Ovary (tissue), 10 donors: ENCODE measurements at regions of chrX and their contacts with region 1.

Region 1: DNA sequence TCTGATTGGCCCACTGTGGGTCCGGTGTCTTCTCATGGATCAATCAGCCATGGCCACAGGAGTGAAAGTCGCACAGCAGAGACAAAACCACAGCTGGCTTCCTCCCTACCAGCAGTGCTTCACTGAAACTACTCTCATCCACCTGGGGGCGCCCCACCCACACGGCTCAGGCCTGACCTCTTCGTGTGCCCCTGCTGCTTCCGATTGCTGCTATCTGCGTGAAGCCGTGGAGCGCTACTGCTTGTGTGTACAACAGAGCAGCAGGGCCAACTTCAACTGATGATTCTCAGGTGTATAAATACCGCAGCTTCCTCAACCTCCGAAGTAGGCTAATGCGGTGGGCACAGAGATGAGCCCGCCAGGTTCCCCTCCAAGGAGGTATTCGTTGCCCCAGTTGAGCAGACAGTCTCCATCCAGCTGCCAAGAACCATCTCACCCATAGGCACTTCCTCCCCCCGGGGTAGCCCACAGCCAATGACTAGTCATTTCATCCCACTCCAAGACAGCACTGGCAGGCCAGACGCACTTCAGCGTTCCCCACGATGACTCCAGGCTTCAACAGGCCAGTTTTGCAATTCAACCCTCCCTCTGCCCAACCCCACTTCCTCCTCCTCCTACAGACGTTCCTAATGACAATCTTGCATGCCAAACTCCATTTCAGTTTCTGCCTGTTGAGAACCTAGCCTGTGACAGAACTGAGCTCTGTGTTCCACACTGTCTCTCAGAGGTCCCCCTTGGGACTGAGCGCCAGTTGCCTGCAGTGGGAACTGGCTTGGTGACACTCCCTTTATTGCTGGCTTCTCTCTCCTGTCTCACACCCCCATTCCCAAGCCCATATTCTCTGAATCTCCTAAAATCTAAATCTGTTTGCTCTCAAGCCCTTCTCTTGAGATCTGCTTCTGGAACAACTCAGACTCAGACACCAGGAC is 41.3 kb upstream of the ATP6AP2 start:
- DNase-seq: peak in 1 of 5 donors; percentile 33
- H3K4me3 ChIP-seq: no peak overlapping the region
- H3K27ac ChIP-seq: no peak overlapping the region
- H3K4me1 ChIP-seq: no peaks in the 10 kb centered on the region
- H3K27me3 ChIP-seq: no peaks in the 10 kb centered on the region
- CTCF ChIP-seq: no peak
- EP300 ChIP-seq: no peak
- POLR2A ChIP-seq: no peak

Region 2: DNA sequence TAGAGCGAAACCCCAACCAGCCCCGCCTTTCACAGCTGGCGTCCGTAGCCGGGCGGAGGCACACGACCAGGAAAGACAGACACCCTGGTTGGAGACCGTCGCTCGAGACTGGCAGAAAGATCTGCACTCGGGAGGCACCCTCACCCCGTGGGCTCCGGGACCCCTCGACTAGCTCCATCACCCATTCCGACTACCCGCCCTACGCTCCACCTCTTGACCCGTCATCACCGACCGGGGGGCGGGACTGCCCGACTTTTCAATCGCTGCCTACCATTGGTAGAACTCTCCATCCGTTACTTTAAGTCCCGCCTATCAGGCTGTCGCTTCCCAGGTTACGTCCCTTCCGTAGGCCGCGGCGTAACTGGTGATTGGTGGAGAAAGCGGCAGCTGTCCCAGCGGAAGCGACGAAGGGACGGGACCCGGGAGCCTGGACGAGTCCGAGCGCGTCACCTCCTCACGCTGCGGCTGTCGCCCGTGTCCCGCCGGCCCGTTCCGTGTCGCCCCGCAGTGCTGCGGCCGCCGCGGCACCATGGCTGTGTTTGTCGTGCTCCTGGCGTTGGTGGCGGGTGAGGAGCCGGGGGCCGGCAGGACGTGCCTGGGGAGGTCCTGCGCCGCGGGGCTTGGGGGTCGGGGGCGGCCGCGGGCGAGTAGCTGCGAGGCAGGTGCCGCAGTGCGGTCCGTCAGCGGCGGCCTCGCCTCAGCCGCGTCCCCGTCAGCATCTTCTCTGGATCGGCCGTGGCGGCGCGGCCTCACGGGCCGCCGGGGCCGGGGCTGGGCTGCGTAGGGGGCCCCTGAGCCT is 41.3 kb after region 1 on chrX and contains the start of gene ATP6AP2:
- intact Hi-C with region 1: no loop called
- DNase-seq: peak; percentile 84 to 90 (median 88)
- H3K4me3 ChIP-seq: peak within 1 kb of the TSS; percentile 41
- H3K27ac ChIP-seq: peak within 1 kb of the TSS in 1 of 2 donors; percentile 64
- H3K4me1 ChIP-seq: no peaks in the 10 kb centered on the region
- H3K27me3 ChIP-seq: no peaks in the 10 kb centered on the region
- CTCF ChIP-seq: no peak
- EP300 ChIP-seq: no peak
- POLR2A ChIP-seq: peak; percentile 27
- total RNA-seq, gene ATP6AP2: 63.2 to 92.8 (median 85.2) TPM

Region 3: DNA sequence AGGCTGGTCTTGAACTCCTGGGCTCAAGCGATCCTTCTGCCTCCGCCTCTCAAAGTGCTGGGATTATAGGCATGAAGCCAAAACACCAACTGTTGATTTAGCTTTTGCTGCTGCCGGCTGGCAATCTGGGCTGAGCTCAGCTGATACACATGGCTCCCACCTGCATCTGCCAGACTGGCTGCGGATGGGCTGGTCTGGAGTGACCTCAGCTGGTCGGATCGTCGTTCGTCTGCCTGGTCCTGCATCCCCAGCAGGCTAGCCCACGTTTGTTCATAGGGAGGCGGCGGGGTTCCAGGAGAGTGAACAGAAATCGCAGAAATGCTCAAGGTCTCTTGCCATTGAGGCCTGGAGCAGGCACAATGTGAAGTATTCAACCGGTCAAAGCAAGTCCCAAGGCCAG is 720.0 kb after region 1 on chrX:
- intact Hi-C with region 1: loop called in 2 of 4 experiments (anchors 10 kb)
- DNase-seq: peak in 1 of 5 donors; percentile 47
- H3K4me3 ChIP-seq: no peak overlapping the region
- H3K27ac ChIP-seq: no peak overlapping the region
- H3K4me1 ChIP-seq: no peaks in the 10 kb centered on the region
- H3K27me3 ChIP-seq: no peaks in the 10 kb centered on the region
- CTCF ChIP-seq: no peak
- EP300 ChIP-seq: no peak
- POLR2A ChIP-seq: no peak